Body of pancreas (tissue), 4 donors: ENCODE measurements at regions of chr3 and their contacts with region 1.

Region 1: DNA sequence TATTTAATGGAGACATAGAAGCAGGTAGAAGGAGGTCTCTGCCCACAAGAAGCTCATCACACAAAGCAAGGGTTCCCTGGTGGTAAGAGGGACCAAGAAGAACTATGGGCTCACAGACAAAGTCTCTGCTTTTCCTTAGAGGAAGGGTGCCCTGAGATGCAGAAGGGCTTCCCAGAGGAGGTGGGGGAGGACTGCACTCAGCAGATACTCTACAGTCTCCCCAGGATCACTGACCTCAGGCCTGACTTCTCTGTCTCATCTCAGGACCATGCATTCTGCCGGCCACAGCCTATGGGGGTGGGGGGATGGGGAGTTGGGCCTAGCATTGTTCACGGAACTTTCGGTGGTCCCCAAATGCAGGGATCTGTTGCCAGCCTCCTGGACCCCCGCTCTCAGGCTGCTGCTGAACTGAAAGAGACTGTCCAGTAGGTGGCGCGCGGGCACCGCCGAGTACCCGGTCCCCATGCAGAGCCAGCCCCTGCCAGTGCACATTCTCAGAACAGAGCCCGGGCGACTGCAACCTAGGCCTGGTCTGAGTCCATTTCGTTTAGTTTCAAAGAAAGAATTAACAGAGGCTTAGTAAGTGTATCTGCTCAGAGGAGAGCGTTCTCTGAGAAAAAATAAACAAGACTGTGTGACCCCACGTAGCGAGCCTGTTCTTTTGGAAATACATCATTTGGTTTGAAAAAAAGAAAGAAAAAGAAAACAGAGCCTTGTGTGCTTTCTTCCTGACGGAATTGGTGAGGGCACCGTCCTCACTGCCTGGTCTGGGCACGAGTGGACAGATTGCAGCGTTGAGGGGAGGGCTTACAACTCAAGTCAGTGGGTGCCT is 74.1 kb downstream of the LRTM1 start:
- DNase-seq: peak; percentile 64 to 80 (median 76)
- ATAC-seq: peak; percentile 74
- H3K4me3 ChIP-seq: no peak overlapping the region
- H3K27ac ChIP-seq: no peak overlapping the region
- H3K4me1 ChIP-seq: no peaks in the 10 kb centered on the region
- H3K27me3 ChIP-seq: no peaks in the 10 kb centered on the region
- CTCF ChIP-seq: peak; percentile 67 to 86 (median 82)
- POLR2A ChIP-seq: no peak

Region 2: DNA sequence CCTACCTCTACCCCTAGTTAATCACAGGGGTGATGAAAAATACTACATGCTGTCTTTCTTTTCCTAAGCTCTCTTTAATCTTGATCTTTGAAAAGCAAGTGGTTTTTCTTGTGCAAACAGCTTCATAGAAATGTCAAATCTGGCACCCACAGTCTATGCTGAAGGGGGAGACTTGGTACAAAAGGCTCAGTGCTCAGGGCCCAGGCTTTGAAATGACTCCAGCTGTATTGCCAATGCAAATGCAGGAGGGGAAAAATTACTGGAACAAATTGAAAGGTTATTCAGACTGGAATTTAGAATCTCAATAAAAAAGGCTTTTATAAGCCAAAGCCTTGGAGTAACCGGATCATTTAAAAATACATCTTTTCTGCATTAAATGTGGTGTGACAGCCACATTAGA is 149.9 kb before region 1 on chr3:
- intact Hi-C with region 1: no loop called
- DNase-seq: no peak
- ATAC-seq: no peak
- H3K4me3 ChIP-seq: no peak overlapping the region
- H3K27ac ChIP-seq: no peak overlapping the region
- H3K4me1 ChIP-seq: no peaks in the 10 kb centered on the region
- H3K27me3 ChIP-seq: no peaks in the 10 kb centered on the region
- CTCF ChIP-seq: no peak
- POLR2A ChIP-seq: no peak

Region 3: GRCh38 chr3:54983271-54984099 is 129.7 kb after region 1 on chr3:
- intact Hi-C with region 1: no loop called
- DNase-seq: no peak
- ATAC-seq: no peak
- H3K4me3 ChIP-seq: no peak overlapping the region
- H3K27ac ChIP-seq: no peak overlapping the region
- H3K4me1 ChIP-seq: no peaks in the 10 kb centered on the region
- H3K27me3 ChIP-seq: no peaks in the 10 kb centered on the region
- CTCF ChIP-seq: no peak
- POLR2A ChIP-seq: no peak

Region 4: DNA sequence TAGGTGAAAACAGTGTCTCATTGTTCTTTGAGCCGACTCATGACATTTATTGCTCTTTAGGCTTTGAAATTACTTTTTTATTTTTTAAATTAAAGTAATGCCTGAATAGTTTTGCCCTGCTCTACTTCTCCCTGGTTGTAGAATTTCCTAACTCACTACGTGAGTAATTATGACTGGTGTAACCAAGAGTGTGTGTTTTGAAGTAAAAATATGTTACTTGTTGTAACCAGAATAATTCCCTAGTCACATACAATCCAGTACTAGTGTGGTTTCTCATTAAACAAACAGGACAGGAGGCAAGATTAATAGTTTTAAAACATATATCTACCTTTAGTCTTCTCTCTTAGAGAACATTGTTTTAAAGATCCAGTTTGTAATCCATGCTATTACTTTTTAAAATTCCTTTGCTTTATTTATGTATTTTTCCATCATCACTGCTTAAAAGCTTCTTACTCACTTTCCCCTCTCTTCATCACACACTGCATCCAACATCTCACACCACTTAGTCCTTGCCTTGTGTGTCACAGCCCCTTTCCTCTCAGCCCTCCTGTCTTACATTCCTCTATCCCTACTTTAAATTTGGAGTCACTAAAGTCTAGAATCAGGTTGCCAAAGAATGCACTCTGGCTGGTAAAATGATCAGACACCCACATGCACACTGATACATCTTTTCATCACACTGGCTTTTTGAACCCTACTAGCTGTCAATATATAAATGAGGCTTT is 413.6 kb after region 1 on chr3:
- intact Hi-C with region 1: no loop called
- DNase-seq: no peak
- ATAC-seq: no peak
- H3K4me3 ChIP-seq: no peak overlapping the region
- H3K27ac ChIP-seq: no peak overlapping the region
- H3K4me1 ChIP-seq: no peaks in the 10 kb centered on the region
- H3K27me3 ChIP-seq: no peaks in the 10 kb centered on the region
- CTCF ChIP-seq: no peak
- POLR2A ChIP-seq: no peak

Region 5: GRCh38 chr3:56251343-56251945 is 1397.7 kb after region 1 on chr3:
- intact Hi-C with region 1: loop called (anchors 5 kb)
- DNase-seq: peak; percentile 33 to 57 (median 48)
- ATAC-seq: peak; percentile 35
- H3K4me3 ChIP-seq: no peak overlapping the region
- H3K27ac ChIP-seq: no peak overlapping the region
- H3K4me1 ChIP-seq: no peaks in the 10 kb centered on the region
- H3K27me3 ChIP-seq: no peaks in the 10 kb centered on the region
- CTCF ChIP-seq: peak; percentile 27 to 88 (median 72)
- POLR2A ChIP-seq: no peak